WTC11 (cell line): ENCODE measurements at regions of chr3 and their contacts with region 1.

Region 1: DNA sequence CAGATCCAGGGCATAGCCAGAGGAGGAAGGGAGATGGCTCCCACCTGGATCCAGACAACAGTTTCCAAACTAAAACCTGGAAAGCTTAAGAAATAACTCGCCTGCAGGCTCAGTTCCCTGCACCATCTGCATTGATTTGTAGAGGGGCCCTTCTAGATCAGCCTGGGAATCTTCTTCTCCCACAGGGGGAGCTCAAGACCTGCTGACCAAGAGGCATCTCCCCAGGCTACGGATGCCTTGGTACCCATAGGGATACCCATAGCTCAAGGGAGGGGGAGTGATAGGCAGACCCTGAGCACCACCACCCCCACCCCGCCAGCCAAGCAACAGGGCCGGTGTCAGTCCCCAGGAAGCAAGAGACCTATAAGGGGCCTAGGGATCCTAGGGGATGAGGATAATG is 28.0 kb upstream of the DCLK3 start:
- DNase-seq: peak; percentile 71
- ATAC-seq: peak; percentile 100
- H3K4me3 Mint-ChIP-seq: no peak overlapping the region
- H3K27ac Mint-ChIP-seq: no peak overlapping the region
- H3K4me1 Mint-ChIP-seq: peaks cover 5% of the 10 kb centered on the region; the same call in 1 of the 2 replicates
- H3K27me3 Mint-ChIP-seq: peaks cover 3% of the 10 kb centered on the region
- CTCF ChIP-seq: peak; percentile 52; the same call in 1 of the 2 replicates

Region 2: DNA sequence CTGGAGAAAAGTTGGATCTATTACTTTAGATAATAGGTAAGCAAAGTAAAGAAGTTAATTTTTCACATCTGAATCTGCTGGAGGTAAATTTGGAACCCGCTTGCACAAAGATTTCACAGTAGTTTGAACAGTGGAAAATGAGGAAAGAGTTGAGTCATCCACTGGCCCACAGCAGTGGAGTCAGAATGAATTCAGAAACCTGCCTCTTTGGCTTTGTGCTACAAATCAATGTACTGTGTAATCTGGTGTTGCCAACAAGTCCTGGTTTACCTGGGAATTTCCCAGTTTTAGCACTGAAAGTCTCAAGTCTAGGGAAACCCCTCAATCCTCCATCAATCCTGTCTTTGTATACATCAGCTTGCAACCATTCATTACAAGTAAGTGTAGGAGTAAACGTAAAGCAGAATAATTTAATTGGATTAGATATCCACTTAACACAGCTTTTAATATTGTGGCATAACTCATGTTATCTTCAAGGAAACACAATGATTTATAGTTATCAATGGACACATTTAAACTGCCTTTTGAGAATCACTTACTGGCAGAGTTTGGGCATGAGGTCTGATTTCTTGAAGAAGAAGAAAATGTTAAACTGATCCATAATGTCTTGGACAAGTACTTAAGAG is 128.6 kb before region 1 on chr3:
- CTCF ChIA-PET with region 1: no interaction called
- POLR2A ChIA-PET with region 1: no interaction called
- DNase-seq: no peak
- ATAC-seq: no peak
- H3K4me3 Mint-ChIP-seq: no peak overlapping the region
- H3K27ac Mint-ChIP-seq: no peak overlapping the region
- H3K4me1 Mint-ChIP-seq: 0 out of 2 replicates have a peak, but pooled peaks cover 4% of the 10 kb centered on the region
- H3K27me3 Mint-ChIP-seq: no peaks in the 10 kb centered on the region
- CTCF ChIP-seq: no peak

Region 3: GRCh38 chr3:36804295-36805055 is 12.1 kb after region 1 on chr3:
- CTCF ChIA-PET with region 1: interaction called, 12 read pairs
- POLR2A ChIA-PET with region 1: no interaction called
- DNase-seq: peak; percentile 34
- ATAC-seq: peak; percentile 72
- H3K4me3 Mint-ChIP-seq: no peak overlapping the region
- H3K27ac Mint-ChIP-seq: no peak overlapping the region
- H3K4me1 Mint-ChIP-seq: peaks cover 18% of the 10 kb centered on the region
- H3K27me3 Mint-ChIP-seq: no peaks in the 10 kb centered on the region
- CTCF ChIP-seq: no peak

Region 4: DNA sequence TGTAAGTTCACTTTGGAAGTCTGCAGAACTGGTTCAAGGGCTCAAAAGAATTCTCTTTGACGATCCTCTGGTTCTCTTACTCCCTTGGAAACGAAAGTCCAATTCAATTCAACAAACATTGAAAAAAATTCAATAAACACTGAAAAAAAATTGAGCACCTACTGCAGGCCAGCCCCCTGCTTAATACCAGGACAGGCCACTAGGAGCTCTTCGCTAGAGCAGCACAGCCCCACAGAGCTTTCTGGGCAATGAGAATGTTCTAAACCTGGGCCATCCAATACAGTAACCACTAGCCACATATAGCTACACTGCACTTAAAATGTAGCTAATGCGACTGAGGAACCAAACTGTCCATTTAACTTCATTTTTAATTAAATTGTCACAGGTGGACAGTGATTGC is 22.4 kb after region 1 on chr3:
- CTCF ChIA-PET with region 1: interaction called, 37 read pairs
- POLR2A ChIA-PET with region 1: no interaction called
- DNase-seq: no peak
- ATAC-seq: peak; percentile 86
- H3K4me3 Mint-ChIP-seq: no peak overlapping the region
- H3K27ac Mint-ChIP-seq: no peak overlapping the region
- H3K4me1 Mint-ChIP-seq: peaks cover 5% of the 10 kb centered on the region; the same call in 1 of the 2 replicates
- H3K27me3 Mint-ChIP-seq: no peaks in the 10 kb centered on the region
- CTCF ChIP-seq: 0 out of 2 replicates have a peak, but pooled peaks have one; percentile 31

Region 5: DNA sequence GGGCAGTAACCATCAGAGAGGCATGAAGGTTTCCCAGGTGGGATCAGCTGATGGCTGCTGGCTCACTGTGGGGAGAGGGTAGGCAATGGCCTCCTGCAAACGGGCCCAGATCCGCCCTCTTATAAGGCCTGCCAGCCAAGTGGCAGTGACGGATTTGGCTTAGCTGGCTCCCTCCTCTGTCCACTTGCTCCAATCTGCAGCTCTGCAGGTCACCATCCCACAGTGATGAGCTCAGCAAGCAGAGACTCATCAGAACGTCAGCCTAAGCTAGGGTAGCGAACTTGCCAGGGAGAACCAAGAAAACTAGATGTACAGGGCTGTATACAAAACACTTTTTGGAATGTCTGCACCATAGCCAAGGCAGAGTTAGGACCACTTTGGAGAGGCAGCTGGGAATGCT is 34.8 kb after region 1 on chr3:
- CTCF ChIA-PET with region 1: interaction called, 14 read pairs
- POLR2A ChIA-PET with region 1: no interaction called
- DNase-seq: no peak
- ATAC-seq: peak; percentile 39
- H3K4me3 Mint-ChIP-seq: no peak overlapping the region
- H3K27ac Mint-ChIP-seq: no peak overlapping the region
- H3K4me1 Mint-ChIP-seq: peaks cover 11% of the 10 kb centered on the region
- H3K27me3 Mint-ChIP-seq: no peaks in the 10 kb centered on the region
- CTCF ChIP-seq: no peak

Region 6: DNA sequence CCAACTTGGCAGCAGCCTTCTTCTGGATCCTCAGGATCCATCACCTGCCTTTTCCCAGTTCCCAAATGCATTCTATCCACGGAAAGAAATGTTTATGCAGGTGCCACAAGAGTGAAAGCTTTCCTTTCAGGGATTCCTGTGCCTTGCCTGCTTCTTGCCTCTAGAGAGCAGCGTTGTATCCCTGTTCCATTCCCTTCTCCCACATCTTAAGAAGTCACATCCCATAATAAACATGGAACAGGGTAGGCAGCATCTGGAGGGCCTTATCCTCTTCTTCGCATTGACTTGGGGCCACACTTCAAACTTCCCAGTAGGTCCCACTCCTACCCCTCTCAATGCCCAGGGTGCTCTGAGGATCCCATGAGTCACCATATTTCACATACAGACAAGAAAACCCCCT is 44.7 kb after region 1 on chr3:
- CTCF ChIA-PET with region 1: interaction called, 11 read pairs
- POLR2A ChIA-PET with region 1: no interaction called
- DNase-seq: no peak
- ATAC-seq: peak; percentile 90
- H3K4me3 Mint-ChIP-seq: no peak overlapping the region
- H3K27ac Mint-ChIP-seq: no peak overlapping the region
- H3K4me1 Mint-ChIP-seq: no peaks in the 10 kb centered on the region
- H3K27me3 Mint-ChIP-seq: no peaks in the 10 kb centered on the region
- CTCF ChIP-seq: no peak

Region 7: DNA sequence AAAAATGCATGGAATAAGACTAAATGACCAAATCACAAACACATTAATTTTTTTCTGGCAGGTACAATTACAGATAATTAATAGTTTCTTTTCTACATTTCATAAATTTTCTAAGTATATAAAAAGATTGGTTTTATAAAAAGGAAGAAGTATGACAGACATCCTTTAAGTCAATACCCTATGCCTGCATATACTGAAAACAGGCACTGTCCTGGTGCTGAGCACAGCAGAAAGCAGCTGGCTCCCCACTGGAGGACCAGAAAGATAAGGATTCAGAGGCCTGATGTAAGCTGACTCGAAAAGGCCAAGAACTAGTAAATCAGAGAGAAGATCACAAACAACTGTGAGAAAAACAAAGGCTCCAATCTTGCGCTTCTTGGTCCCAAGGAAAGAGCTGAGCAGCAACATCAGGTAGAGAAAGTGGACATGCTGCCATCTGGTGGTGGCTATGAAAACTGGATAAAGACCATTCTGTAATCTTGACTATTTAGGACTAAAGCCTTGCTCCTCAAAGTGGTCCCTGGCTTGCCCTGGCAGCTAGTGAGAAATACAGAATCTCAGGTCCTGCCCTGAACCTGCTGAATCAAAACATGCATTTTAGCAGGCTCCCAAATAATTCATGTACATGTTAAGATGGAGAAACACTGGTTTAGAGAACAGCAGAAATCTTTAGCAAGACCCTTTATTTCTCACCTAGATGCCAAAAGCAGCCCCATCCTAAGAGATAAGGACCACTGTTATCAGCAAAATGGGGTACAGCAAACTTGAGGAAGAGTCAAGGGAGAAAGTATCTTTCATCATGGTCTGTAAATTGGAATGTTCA is 76.5 kb after region 1 on chr3:
- CTCF ChIA-PET with region 1: interaction called, 80 read pairs
- POLR2A ChIA-PET with region 1: no interaction called
- DNase-seq: peak; percentile 54
- ATAC-seq: peak; percentile 87
- H3K4me3 Mint-ChIP-seq: no peak overlapping the region
- H3K27ac Mint-ChIP-seq: no peak overlapping the region
- H3K4me1 Mint-ChIP-seq: peaks cover 6% of the 10 kb centered on the region
- H3K27me3 Mint-ChIP-seq: no peaks in the 10 kb centered on the region; the same call in 1 of the 2 replicates
- CTCF ChIP-seq: peak; percentile 72

Region 8: DNA sequence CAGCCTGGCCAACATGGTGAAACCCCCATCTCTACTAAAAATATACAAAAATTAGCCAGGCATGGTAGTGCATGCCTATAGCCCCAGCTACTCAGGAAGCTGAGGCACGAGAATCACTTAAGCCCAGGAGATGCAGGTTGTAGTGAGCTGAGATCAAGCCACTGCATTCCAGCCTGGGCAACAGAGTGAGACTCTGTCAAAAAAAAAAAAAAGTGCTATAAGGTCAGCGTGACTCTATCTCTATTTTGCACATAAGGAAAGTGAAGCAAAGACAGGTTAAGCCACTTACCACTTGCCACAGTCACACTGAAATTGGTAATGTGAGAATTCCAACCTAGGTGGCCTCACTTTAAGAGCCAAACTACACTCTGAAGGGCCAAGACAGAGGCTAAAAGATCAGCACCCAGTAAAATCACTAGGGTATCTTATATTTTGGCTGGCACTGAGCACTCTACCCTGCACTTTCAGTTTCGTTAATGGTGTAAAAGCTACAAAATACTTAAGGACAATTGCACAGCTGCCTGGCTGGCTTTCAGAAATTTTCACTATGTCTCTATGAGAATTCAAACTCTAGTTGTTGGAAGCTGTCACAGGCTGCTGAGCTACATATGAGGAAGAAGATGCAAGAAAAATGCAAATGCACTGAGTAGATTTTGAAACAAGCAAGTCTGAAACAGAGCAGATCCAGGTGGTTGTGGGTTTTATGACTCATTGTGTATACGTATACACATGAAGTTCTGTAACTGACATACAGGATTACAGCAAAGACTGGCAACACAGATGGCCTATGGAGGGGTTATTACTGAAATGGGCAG is 119.9 kb after region 1 on chr3:
- CTCF ChIA-PET with region 1: no interaction called
- POLR2A ChIA-PET with region 1: no interaction called
- DNase-seq: no peak
- ATAC-seq: no peak
- H3K4me3 Mint-ChIP-seq: no peak overlapping the region
- H3K27ac Mint-ChIP-seq: no peak overlapping the region
- H3K4me1 Mint-ChIP-seq: peaks cover 13% of the 10 kb centered on the region
- H3K27me3 Mint-ChIP-seq: no peaks in the 10 kb centered on the region
- CTCF ChIP-seq: no peak